Left ventricle myocardium superior (tissue), 1 donor: ENCODE measurements at regions of chr1 and their contacts with region 1.

Region 1: GRCh38 chr1:31182352-31182751 is 57.3 kb downstream of the NKAIN1 start:
- DNase-seq: peak; percentile 84
- ATAC-seq: peak; percentile 93

Region 2: GRCh38 chr1:31084782-31085569 is 97.4 kb before region 1 on chr1:
- intact Hi-C with region 1: no loop called
- DNase-seq: no peak
- ATAC-seq: no peak

Region 3: GRCh38 chr1:31111290-31111977 is 70.9 kb before region 1 on chr1:
- intact Hi-C with region 1: no loop called
- DNase-seq: peak; percentile 69
- ATAC-seq: peak; percentile 61

Region 4: GRCh38 chr1:31216016-31216415 is 33.7 kb after region 1 on chr1:
- intact Hi-C with region 1: no loop called
- DNase-seq: peak; percentile 83
- ATAC-seq: peak; percentile 95

Region 5: DNA sequence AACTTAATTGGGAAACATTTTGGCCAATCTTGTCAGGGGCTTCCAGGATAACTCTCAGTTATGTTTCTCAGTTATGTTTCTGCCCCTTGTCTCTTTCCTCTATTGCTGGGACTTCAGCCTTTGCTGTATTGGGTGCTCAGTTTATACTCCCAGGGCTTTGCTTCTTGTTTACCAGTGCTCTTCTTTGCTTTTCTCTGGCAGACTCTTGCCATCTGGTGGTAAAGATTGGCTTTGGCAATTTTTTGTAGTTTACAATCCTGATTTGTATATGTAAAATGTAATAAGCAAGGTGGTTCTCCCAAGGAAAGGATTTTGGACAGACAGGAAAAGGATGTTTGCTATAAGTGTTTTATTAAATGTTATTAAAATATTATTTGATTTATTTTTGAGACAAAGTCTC is 152.7 kb after region 1 on chr1:
- intact Hi-C with region 1: loop called (anchors 10 kb)
- DNase-seq: no peak
- ATAC-seq: peak; percentile 28

Region 6: DNA sequence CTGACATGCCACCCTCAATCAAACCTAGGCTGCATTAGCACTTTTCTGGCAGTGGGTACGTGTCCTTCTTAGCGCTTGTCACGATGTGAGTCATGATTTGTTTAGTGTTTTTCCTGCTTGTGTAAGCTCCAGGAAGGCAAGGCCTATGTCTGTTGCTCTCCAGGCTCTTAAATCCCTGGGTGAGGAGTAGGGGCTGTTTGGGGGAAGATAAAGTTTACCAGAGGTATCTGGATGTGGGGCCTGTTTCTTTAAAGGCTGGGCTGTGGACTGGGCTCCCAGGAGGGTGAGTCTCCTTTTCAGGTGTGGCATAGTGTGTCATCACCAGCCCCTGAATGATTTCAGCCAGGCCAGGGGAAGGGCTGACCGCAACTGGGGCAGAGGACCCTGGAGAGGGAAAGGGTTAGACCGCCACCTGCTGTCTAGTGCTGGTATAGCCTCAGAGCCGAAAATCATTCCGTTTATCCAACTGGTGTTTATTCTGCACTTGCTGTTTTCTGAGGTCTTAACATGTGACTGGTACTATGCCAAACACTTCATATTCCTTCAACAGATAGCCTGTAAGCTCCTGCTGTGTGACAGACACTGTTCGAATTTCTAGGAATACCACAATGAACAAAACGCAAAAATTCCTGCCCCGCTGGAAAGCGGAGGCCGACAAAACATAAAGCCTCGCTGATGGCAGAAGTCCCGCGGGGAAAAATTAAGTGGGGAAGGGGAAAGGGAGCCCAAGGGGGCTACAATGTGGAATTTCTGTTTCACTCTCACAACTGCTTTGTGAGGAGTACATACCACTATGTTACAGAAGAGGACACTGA is 240.4 kb after region 1 on chr1:
- intact Hi-C with region 1: loop called (anchors 10 kb)
- DNase-seq: peak; percentile 68
- ATAC-seq: peak; percentile 82

Region 7: GRCh38 chr1:31548907-31549808 is 366.8 kb after region 1 on chr1:
- intact Hi-C with region 1: loop called (anchors 10 kb)
- DNase-seq: peak; percentile 79
- ATAC-seq: peak; percentile 92